Aorta (tissue), 5 donors: ENCODE measurements at regions of chr15 and their contacts with region 1.

Region 1: DNA sequence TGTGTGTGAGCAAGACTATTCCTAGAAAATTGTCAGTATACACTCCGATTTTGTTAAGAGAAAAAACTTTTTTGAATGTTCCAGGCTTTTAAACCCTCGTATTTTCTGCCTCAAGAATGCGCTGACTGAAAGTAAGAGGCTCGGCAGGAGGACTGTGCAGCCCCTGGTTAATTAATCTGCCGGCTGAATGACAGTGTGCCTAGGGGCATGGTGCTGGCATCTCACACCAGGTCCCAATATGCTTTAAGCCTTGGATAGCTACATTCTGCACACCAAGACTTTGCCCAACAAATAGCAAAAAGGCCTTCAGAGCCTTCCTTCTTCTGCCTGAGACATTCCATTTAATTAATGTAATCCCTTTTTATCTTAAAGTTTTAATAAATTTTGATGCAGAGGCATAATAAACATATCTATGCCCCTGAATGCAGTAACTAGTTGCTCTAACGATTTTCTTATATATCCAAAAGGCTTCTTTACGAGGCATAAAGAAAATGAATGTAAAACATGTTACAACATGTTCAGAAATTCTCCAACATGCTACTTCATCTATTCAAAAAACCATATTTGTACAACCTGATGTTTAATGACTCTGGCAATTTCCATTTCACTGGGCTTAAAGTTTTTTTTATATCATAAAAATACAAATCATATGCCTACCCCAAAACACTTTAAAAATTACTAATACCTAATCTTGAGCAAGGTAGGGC is 37.9 kb downstream of the DPH6 start:
- DNase-seq: no peak
- ATAC-seq: no peak
- H3K4me3 ChIP-seq: no peak overlapping the region
- H3K27ac ChIP-seq: no peak overlapping the region
- H3K4me1 ChIP-seq: no peaks in the 10 kb centered on the region
- H3K27me3 ChIP-seq: no peaks in the 10 kb centered on the region

Region 2: DNA sequence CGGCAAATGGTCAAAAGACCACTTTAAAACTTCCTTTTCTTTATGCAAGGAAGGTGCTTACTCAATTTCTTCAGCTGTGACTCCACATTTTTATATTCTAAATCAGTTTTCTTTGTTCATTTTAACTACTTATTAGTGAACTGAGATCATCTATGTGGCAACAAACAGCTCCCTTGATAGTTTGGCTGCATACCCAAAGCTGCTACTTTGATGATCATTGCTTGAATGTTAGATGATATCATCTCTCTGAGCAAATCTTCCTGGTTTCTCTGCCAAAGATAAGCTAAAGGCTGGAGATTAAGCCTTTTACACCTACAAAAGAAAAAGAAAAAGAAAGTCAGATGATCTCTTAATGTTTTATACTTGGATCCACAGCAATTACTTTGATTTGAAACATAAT is 57.6 kb before region 1 on chr15:
- intact Hi-C with region 1: loop called in 1 of 2 experiments (anchors 5 kb)
- DNase-seq: no peak
- ATAC-seq: no peak
- H3K4me3 ChIP-seq: no peak overlapping the region
- H3K27ac ChIP-seq: no peak overlapping the region
- H3K4me1 ChIP-seq: no peaks in the 10 kb centered on the region
- H3K27me3 ChIP-seq: no peaks in the 10 kb centered on the region